IMR-90 (cell line): ENCODE measurements at regions of chr9 and their contacts with region 1.

Region 1: DNA sequence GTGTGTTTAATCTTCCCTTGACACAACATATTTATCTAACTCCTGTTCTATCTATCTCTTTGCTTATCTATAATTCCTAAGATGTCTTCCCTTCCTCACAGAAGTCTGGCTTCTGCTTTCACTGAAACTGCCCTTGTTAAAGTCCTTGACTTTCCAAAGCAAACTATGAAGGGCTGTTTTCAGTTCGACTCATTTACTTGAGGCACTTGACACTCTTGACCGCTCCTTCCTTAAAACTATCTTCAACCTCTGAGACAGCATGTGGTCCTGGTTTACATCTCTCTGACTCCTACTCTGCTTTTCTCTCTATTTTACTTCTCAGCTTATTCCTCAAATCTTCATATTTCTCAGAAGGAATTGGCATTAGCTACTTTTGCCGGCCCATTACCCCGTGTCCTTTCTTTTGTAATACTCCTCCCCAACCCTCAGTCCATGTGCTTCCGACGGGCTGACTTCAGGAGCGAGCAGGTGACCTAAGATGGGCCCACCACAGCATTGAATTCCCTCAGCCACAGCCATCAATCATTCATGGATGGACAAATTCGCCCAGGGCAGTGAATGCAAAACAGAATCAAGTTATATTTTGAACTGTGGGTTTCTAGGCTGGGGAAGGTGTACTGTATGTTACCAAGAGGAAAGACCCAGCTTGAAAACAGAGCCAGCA is 1089.2 kb downstream of the PTPRD start:
- DNase-seq: no peak
- ATAC-seq: no peak
- H3K4me3 ChIP-seq: no peak overlapping the region
- H3K27ac ChIP-seq: no peak overlapping the region
- H3K4me1 ChIP-seq: no peaks in the 10 kb centered on the region
- H3K27me3 ChIP-seq: no peaks in the 10 kb centered on the region
- CTCF ChIP-seq: no peak
- POLR2A ChIP-seq: no peak
- RAD21 ChIP-seq: no peak

Region 2: GRCh38 chr9:9560382-9561035 is 36.9 kb after region 1 on chr9:
- CTCF ChIA-PET with region 1: no interaction called
- POLR2A ChIA-PET with region 1: interaction called, 11 read pairs
- dilution Hi-C with region 1: no loop called
- in situ Hi-C with region 1: no loop called
- intact Hi-C with region 1: no loop called
- DNase-seq: no peak
- ATAC-seq: no peak
- H3K4me3 ChIP-seq: no peak overlapping the region
- H3K27ac ChIP-seq: no peak overlapping the region
- H3K4me1 ChIP-seq: no peaks in the 10 kb centered on the region
- H3K27me3 ChIP-seq: no peaks in the 10 kb centered on the region
- CTCF ChIP-seq: no peak
- POLR2A ChIP-seq: no peak
- RAD21 ChIP-seq: no peak

Region 3: DNA sequence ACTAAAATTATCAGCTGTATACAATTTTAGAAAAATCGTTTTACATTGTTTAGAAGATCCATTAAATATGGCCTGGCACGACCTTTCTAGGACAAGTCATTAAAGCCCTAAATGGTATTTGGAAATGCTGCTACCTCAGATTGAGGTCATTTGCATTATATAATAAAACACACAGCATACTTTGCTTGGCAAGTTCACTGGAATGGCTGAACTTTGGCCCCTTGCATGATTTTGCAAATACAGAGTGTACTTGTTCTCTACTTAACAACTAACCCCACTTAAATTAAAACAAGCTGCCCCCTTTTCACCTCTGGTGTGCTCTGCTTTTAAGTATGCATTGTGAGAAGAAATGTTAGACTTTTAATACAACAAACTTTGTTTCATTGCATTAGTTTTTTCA is 229.1 kb after region 1 on chr9:
- CTCF ChIA-PET with region 1: no interaction called
- POLR2A ChIA-PET with region 1: no interaction called
- dilution Hi-C with region 1: no loop called
- in situ Hi-C with region 1: no loop called
- intact Hi-C with region 1: no loop called
- DNase-seq: no peak
- ATAC-seq: no peak
- H3K4me3 ChIP-seq: no peak overlapping the region
- H3K27ac ChIP-seq: no peak overlapping the region
- H3K4me1 ChIP-seq: no peaks in the 10 kb centered on the region
- H3K27me3 ChIP-seq: no peaks in the 10 kb centered on the region
- CTCF ChIP-seq: no peak
- POLR2A ChIP-seq: no peak
- RAD21 ChIP-seq: no peak